ENCODE measurements at regions of chr1 and their contacts with region 1.

Region 1: DNA sequence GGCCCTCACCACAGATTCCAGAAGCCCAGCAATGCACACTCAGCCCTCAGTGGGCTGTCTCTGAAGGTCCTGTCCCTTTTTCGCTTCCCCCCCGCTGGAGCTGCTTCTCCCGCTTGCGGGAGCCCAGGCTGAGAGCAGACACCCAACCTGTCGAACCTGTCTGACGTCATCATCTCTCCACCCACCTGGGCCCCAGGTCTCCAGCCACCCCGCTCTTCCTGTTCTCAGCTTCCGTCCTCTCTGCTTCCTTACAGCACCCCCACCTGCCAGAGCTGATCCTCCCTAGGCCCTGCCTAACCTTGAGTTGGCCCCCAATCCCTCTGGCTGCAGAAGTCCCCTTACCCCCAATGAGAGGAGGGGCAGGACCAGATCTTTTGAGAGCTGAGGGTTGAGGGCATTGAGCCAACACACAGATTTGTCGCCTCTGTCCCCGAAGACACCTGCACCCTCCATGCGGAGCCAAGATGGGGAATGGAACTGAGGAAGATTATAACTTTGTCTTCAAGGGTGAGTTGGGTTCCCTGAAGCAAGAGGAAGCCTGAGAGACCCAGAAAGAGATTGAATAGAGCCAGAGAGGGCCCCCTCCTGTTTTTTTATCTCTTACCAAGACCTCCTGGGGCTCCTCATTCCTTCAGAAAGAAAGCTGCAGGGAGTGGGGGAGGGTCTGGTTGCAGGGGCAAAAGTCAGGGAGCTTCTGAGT is at the start of gene RAB25:
- DNase-seq: no peak
- ATAC-seq: no peak
- H3K4me3 ChIP-seq: no peak within 1 kb of the TSS
- H3K27ac ChIP-seq: no peak within 1 kb of the TSS
- H3K4me1 ChIP-seq: no peaks in the 10 kb centered on the region
- H3K27me3 ChIP-seq: no peaks in the 10 kb centered on the region
- CTCF ChIP-seq: no peak
- EP300 ChIP-seq: no peak
- POLR2A ChIP-seq: no peak
- RAD21 ChIP-seq: no peak
- polyA plus RNA-seq, gene RAB25: not detected

Region 2: GRCh38 chr1:155669233-155670162 is 391.6 kb before region 1 on chr1:
- CTCF ChIA-PET with region 1: no interaction called
- POLR2A ChIA-PET with region 1: no interaction called
- RAD21 ChIA-PET with region 1: no interaction called
- SMC1A ChIA-PET with region 1: no interaction called
- in situ Hi-C with region 1: no loop called
- intact Hi-C with region 1: no loop called
- DNase-seq: no peak
- ATAC-seq: no peak
- H3K4me3 ChIP-seq: no peak overlapping the region
- H3K27ac ChIP-seq: no peak overlapping the region
- H3K4me1 ChIP-seq: no peaks in the 10 kb centered on the region
- H3K27me3 ChIP-seq: no peaks in the 10 kb centered on the region
- CTCF ChIP-seq: no peak
- EP300 ChIP-seq: no peak
- POLR2A ChIP-seq: no peak
- RAD21 ChIP-seq: no peak

Region 3: DNA sequence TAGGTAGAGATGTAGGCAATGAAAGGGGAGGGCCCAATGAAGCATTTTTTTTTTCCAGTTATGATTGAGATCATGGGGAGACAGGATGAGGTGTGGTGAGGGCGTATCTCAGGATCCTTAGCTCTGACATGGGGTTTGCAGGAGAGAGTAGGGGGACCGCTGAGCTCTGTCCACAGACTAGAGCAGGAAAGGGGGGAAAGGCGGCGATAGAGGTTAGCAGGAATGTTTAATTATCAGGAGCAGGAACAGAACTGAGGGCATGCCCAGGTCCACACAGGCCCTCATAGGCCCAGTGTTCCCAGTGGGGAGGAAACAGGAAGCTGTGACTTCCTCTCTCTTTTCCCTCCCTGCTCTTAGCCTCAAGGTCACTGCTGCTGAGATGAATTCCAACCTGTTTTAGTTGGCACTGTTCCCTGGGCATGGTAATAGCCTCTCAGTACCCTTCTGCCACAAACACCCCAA is 120.5 kb before region 1 on chr1:
- CTCF ChIA-PET with region 1: interaction called, 102 read pairs
- POLR2A ChIA-PET with region 1: interaction called, 8 read pairs
- RAD21 ChIA-PET with region 1: interaction called, 68 read pairs
- SMC1A ChIA-PET with region 1: interaction called, 69 read pairs
- in situ Hi-C with region 1: no loop called
- intact Hi-C with region 1: loop called (anchors 2 kb)
- DNase-seq: no peak
- ATAC-seq: peak; percentile 1
- H3K4me3 ChIP-seq: no peak overlapping the region
- H3K27ac ChIP-seq: peak overlapping the region; percentile 49
- H3K4me1 ChIP-seq: peaks cover 53% of the 10 kb centered on the region
- H3K27me3 ChIP-seq: no peaks in the 10 kb centered on the region
- CTCF ChIP-seq: no peak
- EP300 ChIP-seq: no peak
- POLR2A ChIP-seq: no peak
- RAD21 ChIP-seq: no peak

Region 4: GRCh38 chr1:155978325-155978972 is 82.6 kb before region 1 on chr1 and contains the start of gene ARHGEF2:
- CTCF ChIA-PET with region 1: interaction called, 13 read pairs
- POLR2A ChIA-PET with region 1: interaction called, 7 read pairs
- RAD21 ChIA-PET with region 1: interaction called, 38 read pairs
- SMC1A ChIA-PET with region 1: interaction called, 9 read pairs
- in situ Hi-C with region 1: no loop called
- intact Hi-C with region 1: no loop called
- DNase-seq: no peak
- ATAC-seq: peak; percentile 78
- H3K4me3 ChIP-seq: peak within 1 kb of the TSS; percentile 100
- H3K27ac ChIP-seq: peak within 1 kb of the TSS; percentile 97
- H3K4me1 ChIP-seq: peaks cover 28% of the 10 kb centered on the region
- H3K27me3 ChIP-seq: no peaks in the 10 kb centered on the region
- CTCF ChIP-seq: peak in 2 of 3 experiments; percentile 19 to 27; a peak in 4 of 6 replicates
- EP300 ChIP-seq: no peak
- POLR2A ChIP-seq: peak; percentile 91
- RAD21 ChIP-seq: no peak
- polyA plus RNA-seq, gene ARHGEF2: 8.1 to 10.6 TPM

Region 5: GRCh38 chr1:155996166-155996565 is 64.9 kb before region 1 on chr1:
- CTCF ChIA-PET with region 1: interaction called, 62 read pairs
- POLR2A ChIA-PET with region 1: interaction called, 5 read pairs
- RAD21 ChIA-PET with region 1: interaction called, 6 read pairs
- SMC1A ChIA-PET with region 1: interaction called, 43 read pairs
- in situ Hi-C with region 1: no loop called
- intact Hi-C with region 1: no loop called
- DNase-seq: no peak
- ATAC-seq: no peak
- H3K4me3 ChIP-seq: no peak overlapping the region
- H3K27ac ChIP-seq: no peak overlapping the region
- H3K4me1 ChIP-seq: no peaks in the 10 kb centered on the region
- H3K27me3 ChIP-seq: no peaks in the 10 kb centered on the region
- CTCF ChIP-seq: no peak
- EP300 ChIP-seq: no peak
- POLR2A ChIP-seq: no peak
- RAD21 ChIP-seq: no peak

Region 6: GRCh38 chr1:156006666-156007376 is 54.3 kb before region 1 on chr1:
- CTCF ChIA-PET with region 1: interaction called, 14 read pairs
- POLR2A ChIA-PET with region 1: no interaction called
- RAD21 ChIA-PET with region 1: interaction called, 5 read pairs
- SMC1A ChIA-PET with region 1: interaction called, 5 read pairs
- in situ Hi-C with region 1: no loop called
- intact Hi-C with region 1: no loop called
- DNase-seq: no peak
- ATAC-seq: no peak
- H3K4me3 ChIP-seq: no peak overlapping the region
- H3K27ac ChIP-seq: no peak overlapping the region
- H3K4me1 ChIP-seq: peaks cover 3% of the 10 kb centered on the region
- H3K27me3 ChIP-seq: no peaks in the 10 kb centered on the region
- CTCF ChIP-seq: no peak
- EP300 ChIP-seq: no peak
- POLR2A ChIP-seq: peak; percentile 14; the same call in 1 of the 2 replicates
- RAD21 ChIP-seq: no peak

Region 7: GRCh38 chr1:156025877-156026276 is 35.2 kb before region 1 on chr1:
- CTCF ChIA-PET with region 1: interaction called, 15 read pairs
- POLR2A ChIA-PET with region 1: interaction called, 7 read pairs
- RAD21 ChIA-PET with region 1: interaction called, 5 read pairs
- SMC1A ChIA-PET with region 1: interaction called, 14 read pairs
- in situ Hi-C with region 1: no loop called
- intact Hi-C with region 1: no loop called
- DNase-seq: no peak
- ATAC-seq: peak; percentile 95
- H3K4me3 ChIP-seq: no peak overlapping the region
- H3K27ac ChIP-seq: no peak overlapping the region
- H3K4me1 ChIP-seq: no peaks in the 10 kb centered on the region
- H3K27me3 ChIP-seq: no peaks in the 10 kb centered on the region; a peak in 1 of 4 replicates
- CTCF ChIP-seq: peak; percentile 37 to 73 (median 62)
- EP300 ChIP-seq: no peak
- POLR2A ChIP-seq: no peak
- RAD21 ChIP-seq: peak; percentile 42; the same call in 1 of the 2 replicates